ENCODE measurements at regions of chr10 and their contacts with region 1.

Region 1: DNA sequence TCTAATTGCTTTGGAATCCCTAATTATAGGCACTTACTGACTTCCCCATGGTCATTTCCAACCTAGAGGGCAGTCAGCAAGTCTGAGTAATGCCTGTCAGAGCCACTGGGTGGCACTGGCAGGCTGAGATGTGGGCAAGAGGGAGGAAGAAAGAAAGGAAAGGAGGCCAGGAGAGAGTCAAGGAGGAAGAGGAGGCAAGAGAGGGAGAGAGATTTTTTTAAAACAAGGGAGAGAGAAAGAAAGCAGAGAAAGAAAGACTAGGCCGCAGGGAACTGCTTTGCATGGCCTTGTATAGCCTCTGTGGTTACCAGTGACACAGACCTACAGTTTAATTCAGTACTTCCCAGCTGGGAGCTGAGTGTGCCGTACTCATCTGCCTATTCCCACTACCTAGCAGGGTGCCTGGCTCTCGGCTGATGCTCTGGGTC is 210.4 kb upstream of the ADO start:
- DNase-seq: peak; percentile 49 to 73 (median 56)
- ATAC-seq: peak; percentile 98
- H3K4me3 ChIP-seq: no peak overlapping the region
- H3K27ac ChIP-seq: no peak overlapping the region
- H3K4me1 ChIP-seq: no peaks in the 10 kb centered on the region
- H3K27me3 ChIP-seq: no peaks in the 10 kb centered on the region; a peak in 1 of 5 replicates
- CTCF ChIP-seq: peak; percentile 89 to 92 (median 92)
- EP300 ChIP-seq: no peak
- POLR2A ChIP-seq: no peak
- RAD21 ChIP-seq: peak; percentile 90 to 92

Region 2: DNA sequence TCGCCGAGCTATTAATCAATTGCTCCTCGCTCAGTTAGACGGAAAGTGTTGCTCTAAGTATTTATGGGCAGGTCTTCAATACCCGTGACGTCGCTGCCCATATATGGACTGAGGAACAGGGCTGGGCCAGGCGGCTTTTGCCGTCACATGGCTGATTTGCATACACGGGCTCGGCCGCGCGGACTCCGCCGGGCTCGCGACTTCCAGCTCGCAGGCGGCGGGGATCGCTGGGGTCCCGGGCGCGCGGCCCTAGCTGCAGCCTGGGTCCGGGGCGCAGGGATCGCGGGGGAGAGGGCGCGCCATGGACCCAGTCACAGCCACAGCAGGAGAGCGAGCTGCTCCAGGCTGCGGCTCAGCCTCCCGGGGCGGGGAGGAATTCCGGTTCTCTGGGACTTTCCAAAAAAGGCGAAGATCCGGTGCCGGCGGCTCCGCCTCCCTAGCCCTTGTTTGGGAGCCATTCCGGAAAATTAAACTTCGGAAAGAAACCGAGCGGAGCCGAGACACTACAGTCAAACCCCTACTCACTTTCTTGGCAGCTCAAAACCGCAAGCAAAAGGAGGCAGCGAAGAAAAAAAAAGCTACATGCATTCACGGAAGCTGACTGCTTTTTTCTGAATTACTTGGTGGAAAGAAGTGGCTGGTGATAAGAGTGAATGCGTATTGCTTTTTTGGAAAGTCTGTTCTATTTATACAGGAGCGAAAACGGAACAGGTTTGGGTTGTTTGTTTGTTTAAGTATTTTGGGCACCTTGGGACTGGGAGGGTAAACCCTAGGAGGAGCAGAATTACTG is 222.4 kb after region 1 on chr10 and contains the start of gene EGR2:
- CTCF ChIA-PET with region 1: interaction called, 3 read pairs
- POLR2A ChIA-PET with region 1: no interaction called
- in situ Hi-C with region 1: no loop called
- intact Hi-C with region 1: loop called (anchors 5 kb)
- DNase-seq: peak; percentile 80 to 94 (median 88)
- ATAC-seq: peak; percentile 92
- H3K4me3 ChIP-seq: peak within 1 kb of the TSS; percentile 74
- H3K27ac ChIP-seq: peak within 1 kb of the TSS; percentile 70
- H3K4me1 ChIP-seq: peaks cover 7 to 50% of the 10 kb centered on the region in 2 experiments; a peak in 3 of 5 replicates
- H3K27me3 ChIP-seq: peaks cover 19 to 53% of the 10 kb centered on the region in 2 experiments; a peak in 4 of 5 replicates
- CTCF ChIP-seq: no peak
- EP300 ChIP-seq: no peak
- POLR2A ChIP-seq: peak; percentile 64
- RAD21 ChIP-seq: no peak
- polyA plus RNA-seq, gene EGR2: not detected

Region 3: DNA sequence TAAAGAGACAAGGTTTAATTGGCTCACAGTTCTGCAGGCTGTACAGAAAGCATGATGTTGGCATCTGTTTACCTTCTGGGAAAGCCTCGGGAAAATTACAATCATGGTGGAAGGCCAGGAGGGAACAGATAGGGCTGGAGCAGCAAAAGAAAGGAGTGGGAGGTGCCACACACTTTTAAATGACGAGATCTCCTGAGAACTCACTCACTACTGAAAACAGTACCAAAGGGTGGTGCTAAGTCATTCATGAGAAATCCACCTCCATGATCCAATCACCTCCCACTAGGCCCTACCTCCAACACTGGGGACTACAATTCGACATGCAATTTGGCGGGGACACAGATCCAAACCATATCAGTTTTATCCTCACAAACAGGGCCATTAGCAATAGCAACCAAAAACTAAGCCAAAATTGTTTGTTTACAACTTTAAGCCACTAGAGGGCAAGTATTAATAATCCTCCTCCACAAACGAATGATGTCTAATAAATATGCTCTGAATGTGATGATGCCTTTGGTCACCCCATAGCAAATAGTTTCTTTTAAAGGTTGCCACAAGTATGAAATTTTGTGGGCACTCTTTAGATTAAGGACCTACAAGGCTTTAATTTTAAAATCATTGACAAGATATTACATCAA is 409.8 kb after region 1 on chr10:
- CTCF ChIA-PET with region 1: no interaction called
- POLR2A ChIA-PET with region 1: no interaction called
- in situ Hi-C with region 1: no loop called
- intact Hi-C with region 1: loop called (anchors 10 kb)
- DNase-seq: peak in 2 of 4 experiments; percentile 22
- ATAC-seq: no peak; the same call in 2 of the 3 replicates
- H3K4me3 ChIP-seq: no peak overlapping the region
- H3K27ac ChIP-seq: no peak overlapping the region
- H3K4me1 ChIP-seq: no peaks in the 10 kb centered on the region
- H3K27me3 ChIP-seq: peaks cover 0 to 2% of the 10 kb centered on the region in 2 experiments; a peak in 2 of 5 replicates
- CTCF ChIP-seq: peak; percentile 24 to 41 (median 39); a peak in 3 of 6 replicates
- EP300 ChIP-seq: no peak
- POLR2A ChIP-seq: no peak
- RAD21 ChIP-seq: peak in 1 of 2 experiments; percentile 44; a peak in 2 of 4 replicates

Region 4: GRCh38 chr10:63083904-63084689 is 490.0 kb after region 1 on chr10:
- CTCF ChIA-PET with region 1: interaction called, 8 read pairs
- POLR2A ChIA-PET with region 1: no interaction called
- in situ Hi-C with region 1: no loop called
- intact Hi-C with region 1: loop called (anchors 5 kb)
- DNase-seq: peak; percentile 40 to 73 (median 42)
- ATAC-seq: peak; percentile 96
- H3K4me3 ChIP-seq: no peak overlapping the region
- H3K27ac ChIP-seq: no peak overlapping the region
- H3K4me1 ChIP-seq: no peaks in the 10 kb centered on the region
- H3K27me3 ChIP-seq: 0 out of 5 replicates have a peak, but pooled peaks cover 0 to 5% of the 10 kb centered on the region in 2 experiments
- CTCF ChIP-seq: peak; percentile 68 to 91 (median 76)
- EP300 ChIP-seq: no peak
- POLR2A ChIP-seq: no peak
- RAD21 ChIP-seq: peak; percentile 90

Region 5: DNA sequence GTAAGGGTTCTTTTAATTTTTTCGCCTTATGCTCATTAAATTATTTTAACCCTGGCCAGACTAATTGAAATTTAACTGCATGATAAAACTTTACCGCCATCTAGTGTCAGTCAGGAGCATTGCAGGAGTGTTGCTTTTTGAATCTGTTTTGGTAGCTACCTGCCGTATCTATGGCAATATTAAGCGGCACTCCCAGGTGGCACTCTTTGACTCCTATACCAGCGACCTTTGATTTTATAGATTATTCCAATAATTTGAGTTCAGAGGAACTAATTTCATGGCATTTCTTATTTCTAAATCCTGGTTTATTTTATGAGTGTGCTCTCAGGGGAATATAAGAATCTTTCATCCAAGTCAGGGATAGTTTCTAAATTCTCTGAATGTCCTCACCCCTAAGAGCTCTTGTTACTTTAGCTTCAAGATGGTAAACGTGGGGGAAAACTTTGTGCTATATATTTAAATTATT is 1126.0 kb after region 1 on chr10:
- CTCF ChIA-PET with region 1: no interaction called
- POLR2A ChIA-PET with region 1: no interaction called
- in situ Hi-C with region 1: loop called (anchors 25 kb)
- intact Hi-C with region 1: loop called (anchors 10 kb)
- DNase-seq: peak; percentile 46 to 66 (median 61)
- ATAC-seq: peak; percentile 56
- H3K4me3 ChIP-seq: no peak overlapping the region
- H3K27ac ChIP-seq: no peak overlapping the region
- H3K4me1 ChIP-seq: no peaks in the 10 kb centered on the region
- H3K27me3 ChIP-seq: peaks cover 20 to 40% of the 10 kb centered on the region in 2 experiments
- CTCF ChIP-seq: peak; percentile 82 to 98 (median 83)
- EP300 ChIP-seq: no peak
- POLR2A ChIP-seq: no peak
- RAD21 ChIP-seq: peak; percentile 96

Region 6: DNA sequence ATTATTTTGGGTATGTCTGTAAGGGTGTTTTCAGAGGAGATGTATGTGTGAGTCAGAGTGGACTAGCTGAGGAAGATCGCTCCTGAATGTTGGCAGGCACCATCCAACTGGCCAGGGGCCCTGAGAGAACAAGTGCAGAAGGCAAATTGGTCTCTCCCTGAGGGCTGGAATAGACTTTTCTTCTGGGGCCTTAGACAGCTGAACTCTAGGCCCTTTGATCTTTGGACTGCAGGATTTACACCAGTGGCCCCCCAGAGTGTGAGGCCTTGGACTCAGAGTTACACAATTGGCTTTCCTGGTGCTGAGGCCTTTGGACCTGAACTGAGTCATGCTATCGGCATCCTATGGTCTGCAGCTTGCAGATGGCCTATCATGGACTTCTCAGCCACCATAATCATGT is 1144.3 kb after region 1 on chr10:
- CTCF ChIA-PET with region 1: no interaction called
- POLR2A ChIA-PET with region 1: no interaction called
- in situ Hi-C with region 1: loop called (anchors 25 kb)
- intact Hi-C with region 1: no loop called
- DNase-seq: no peak
- ATAC-seq: no peak; the same call in 2 of the 3 replicates
- H3K4me3 ChIP-seq: no peak overlapping the region
- H3K27ac ChIP-seq: no peak overlapping the region
- H3K4me1 ChIP-seq: no peaks in the 10 kb centered on the region
- H3K27me3 ChIP-seq: peaks cover 4% of the 10 kb centered on the region in 2 experiments; a peak in 4 of 5 replicates
- CTCF ChIP-seq: no peak
- EP300 ChIP-seq: no peak
- POLR2A ChIP-seq: no peak
- RAD21 ChIP-seq: no peak